Dorsolateral prefrontal cortex (tissue), 120 donors: ENCODE measurements at regions of chr19 and their contacts with region 1.

Region 1: GRCh38 chr19:41563854-41564514 is 12.0 kb upstream of the CEACAM21 start:
- DNase-seq: no peak
- H3K4me3 ChIP-seq: peak overlapping the region in 18 of 59 donors; percentile 5 to 45 (median 26)
- H3K27ac ChIP-seq: no peak overlapping the region
- H3K27me3 ChIP-seq: peaks cover 2 to 92% (median 53%) of the 10 kb centered on the region in 45 donors
- CTCF ChIP-seq: no peak

Region 2: GRCh38 chr19:41449079-41449864 is 114.7 kb before region 1 on chr19:
- intact Hi-C with region 1: loop called (anchors 2 to 10 kb)
- DNase-seq: peak in 9 of 10 donors; percentile 50 to 81 (median 67)
- H3K4me3 ChIP-seq: peak overlapping the region in 50 of 59 donors; percentile 2 to 55 (median 32)
- H3K27ac ChIP-seq: no peak overlapping the region
- H3K27me3 ChIP-seq: peaks cover 0 to 10% (median 0%) of the 10 kb centered on the region in 45 donors
- CTCF ChIP-seq: peak; percentile 82 to 99 (median 96)

Region 3: DNA sequence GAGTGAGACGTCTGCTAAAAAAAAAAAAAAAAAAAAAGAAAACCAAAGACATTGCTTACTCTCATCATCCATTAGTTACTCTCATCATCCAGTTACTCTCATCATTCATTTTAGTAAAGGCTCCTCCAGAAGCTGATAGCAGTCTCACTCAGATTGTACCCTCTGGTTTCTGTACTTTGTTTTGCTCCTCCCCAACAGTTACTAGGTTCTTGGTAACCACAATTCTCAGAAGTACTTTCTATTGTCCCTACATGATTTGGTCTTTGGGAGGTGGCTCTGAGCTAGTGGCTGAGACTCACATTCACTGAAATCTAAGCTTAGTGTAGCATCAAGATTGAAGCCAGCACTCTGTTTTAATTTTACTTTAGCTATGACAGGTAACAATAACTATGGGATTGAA is 106.7 kb before region 1 on chr19:
- intact Hi-C with region 1: loop called in 1 of 2 experiments (anchors 10 kb)
- DNase-seq: no peak
- H3K4me3 ChIP-seq: no peak overlapping the region
- H3K27ac ChIP-seq: no peak overlapping the region
- H3K27me3 ChIP-seq: peaks cover 0 to 57% (median 21%) of the 10 kb centered on the region in 45 donors
- CTCF ChIP-seq: no peak

Region 4: GRCh38 chr19:41993612-41994483 is 429.9 kb after region 1 on chr19 and contains the start of gene ATP1A3:
- intact Hi-C with region 1: no loop called
- DNase-seq: peak in 9 of 10 donors; percentile 46 to 88 (median 79)
- H3K4me3 ChIP-seq: peak within 1 kb of the TSS; percentile 34 to 85 (median 71)
- H3K27ac ChIP-seq: peak within 1 kb of the TSS in 52 of 59 donors; percentile 7 to 96 (median 82)
- H3K27me3 ChIP-seq: peaks cover 0 to 44% (median 6%) of the 10 kb centered on the region in 45 donors
- CTCF ChIP-seq: no peak
- total RNA-seq, gene ATP1A3: 156 to 918 (median 662) TPM